Caco-2 (cell line): ENCODE measurements at regions of chr10 and their contacts with region 1.

Region 1: DNA sequence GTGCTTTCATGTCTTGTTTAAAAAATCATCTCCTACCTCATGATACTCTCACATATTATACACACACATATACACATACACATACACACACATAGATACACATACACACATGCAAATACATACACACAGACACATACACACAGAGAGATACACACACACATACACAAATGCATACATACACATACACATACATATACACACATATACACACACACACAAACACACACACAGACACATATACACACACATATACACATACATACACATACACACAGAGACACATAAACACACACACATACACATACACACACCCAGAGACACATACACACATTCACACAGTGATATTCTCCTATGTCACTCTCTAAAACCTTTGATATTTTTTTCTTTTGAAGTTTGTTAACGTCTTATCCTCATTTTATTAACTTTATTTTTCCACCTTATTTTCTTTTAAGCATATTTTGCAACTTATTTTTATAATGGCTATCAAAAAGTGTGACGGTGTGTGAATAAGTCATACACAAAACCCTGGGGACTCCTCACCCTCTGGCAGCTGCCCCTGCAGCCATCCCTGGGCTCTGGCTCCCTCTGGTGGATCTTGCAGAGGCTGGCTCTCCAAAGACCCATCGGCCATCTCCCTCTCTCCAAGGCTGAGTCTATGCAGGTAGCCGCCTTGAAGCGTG is 3.9 kb upstream of the C10orf120 start:
- DNase-seq: peak; percentile 75 to 80
- H3K4me3 ChIP-seq: no peak overlapping the region
- H3K4me3 Mint-ChIP-seq: no peak overlapping the region
- H3K27ac Mint-ChIP-seq: no peak overlapping the region
- H3K4me1 ChIP-seq: no peaks in the 10 kb centered on the region
- H3K4me1 Mint-ChIP-seq: no peaks in the 10 kb centered on the region
- H3K27me3 ChIP-seq: no peaks in the 10 kb centered on the region
- H3K27me3 Mint-ChIP-seq: peaks cover 4% of the 10 kb centered on the region
- CTCF ChIP-seq: peak; percentile 88 to 95

Region 2: DNA sequence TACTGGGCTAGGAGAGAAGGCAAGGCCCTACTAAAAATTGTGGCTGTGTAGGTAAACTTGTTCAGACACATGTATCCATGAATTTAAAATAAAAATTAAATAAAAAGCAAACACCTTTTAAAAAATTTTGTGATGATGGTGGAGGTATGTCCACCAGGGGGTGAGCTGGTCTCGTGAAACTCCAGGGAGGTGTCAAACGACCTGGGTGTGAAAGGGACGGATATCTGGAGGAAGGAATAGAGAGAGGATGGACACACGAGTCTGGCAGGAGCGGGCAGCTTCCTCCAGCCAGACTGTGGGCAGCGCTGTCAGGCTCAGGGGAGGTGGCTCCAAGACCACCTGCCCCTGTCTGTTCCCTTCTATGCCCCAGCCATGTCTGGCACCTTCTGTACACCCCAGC is 177.8 kb before region 1 on chr10:
- CTCF ChIA-PET with region 1: no interaction called
- POLR2A ChIA-PET with region 1: no interaction called
- intact Hi-C with region 1: loop called (anchors 5 kb)
- DNase-seq: peak in 1 of 2 experiments; percentile 59
- H3K4me3 ChIP-seq: no peak overlapping the region
- H3K4me3 Mint-ChIP-seq: no peak overlapping the region
- H3K27ac Mint-ChIP-seq: no peak overlapping the region
- H3K4me1 ChIP-seq: no peaks in the 10 kb centered on the region
- H3K4me1 Mint-ChIP-seq: peaks cover 7% of the 10 kb centered on the region
- H3K27me3 ChIP-seq: no peaks in the 10 kb centered on the region
- H3K27me3 Mint-ChIP-seq: peaks cover 3% of the 10 kb centered on the region
- CTCF ChIP-seq: peak; percentile 68 to 79

Region 3: GRCh38 chr10:122648599-122649428 is 54.8 kb before region 1 on chr10:
- CTCF ChIA-PET with region 1: interaction called, 15 read pairs
- POLR2A ChIA-PET with region 1: no interaction called
- intact Hi-C with region 1: loop called (anchors 1 kb)
- DNase-seq: peak; percentile 50 to 68
- H3K4me3 ChIP-seq: no peak overlapping the region
- H3K4me3 Mint-ChIP-seq: no peak overlapping the region
- H3K27ac Mint-ChIP-seq: no peak overlapping the region
- H3K4me1 ChIP-seq: no peaks in the 10 kb centered on the region
- H3K4me1 Mint-ChIP-seq: no peaks in the 10 kb centered on the region
- H3K27me3 ChIP-seq: no peaks in the 10 kb centered on the region
- H3K27me3 Mint-ChIP-seq: peaks cover 20% of the 10 kb centered on the region
- CTCF ChIP-seq: peak; percentile 69 to 84

Region 4: DNA sequence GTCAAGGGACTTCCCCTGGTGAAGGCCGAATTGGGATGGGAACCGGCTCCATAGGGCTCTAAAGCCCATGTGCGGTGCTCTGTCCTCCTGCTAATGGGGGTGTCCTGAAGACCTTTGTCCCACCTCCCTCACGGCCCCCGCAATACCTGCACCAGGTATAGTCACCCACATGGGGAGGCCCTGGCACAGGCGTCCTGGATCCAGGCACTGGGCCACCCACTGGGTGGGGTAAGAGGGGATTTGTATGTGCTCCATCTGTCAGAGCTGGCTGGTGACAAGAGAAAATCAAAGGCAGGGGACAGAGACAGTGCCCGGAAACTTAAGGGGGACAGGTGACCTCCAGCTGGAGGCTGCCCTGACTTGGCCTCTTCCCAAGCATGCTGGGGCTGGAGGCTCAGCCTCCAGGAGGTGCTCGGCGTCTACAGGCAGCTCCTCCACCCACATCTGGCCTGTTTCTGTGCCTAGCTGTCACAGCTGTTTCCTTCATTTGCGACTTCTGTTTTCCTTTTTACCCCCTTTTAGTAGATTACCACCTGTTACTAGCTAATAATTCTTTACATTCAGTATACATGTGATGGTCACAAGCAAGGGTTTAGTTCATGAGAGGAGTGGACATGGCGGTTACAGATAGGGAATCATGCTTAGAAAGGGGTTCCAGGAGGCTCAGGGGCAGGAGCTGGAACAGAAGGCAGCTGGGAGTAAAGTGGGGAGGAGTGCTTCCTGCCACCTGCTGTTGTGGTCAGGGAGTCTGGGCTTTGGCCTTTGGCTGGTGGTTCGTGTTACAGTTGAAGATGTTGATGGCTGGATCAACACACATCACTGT is 144.4 kb after region 1 on chr10:
- CTCF ChIA-PET with region 1: no interaction called
- POLR2A ChIA-PET with region 1: no interaction called
- intact Hi-C with region 1: no loop called
- DNase-seq: no peak
- H3K4me3 ChIP-seq: no peak overlapping the region
- H3K4me3 Mint-ChIP-seq: no peak overlapping the region
- H3K27ac Mint-ChIP-seq: no peak overlapping the region
- H3K4me1 ChIP-seq: no peaks in the 10 kb centered on the region
- H3K4me1 Mint-ChIP-seq: peaks cover 12% of the 10 kb centered on the region
- H3K27me3 ChIP-seq: no peaks in the 10 kb centered on the region
- H3K27me3 Mint-ChIP-seq: no peaks in the 10 kb centered on the region
- CTCF ChIP-seq: no peak